ENCODE measurements at regions of chr1 and their contacts with region 1.

Region 1: DNA sequence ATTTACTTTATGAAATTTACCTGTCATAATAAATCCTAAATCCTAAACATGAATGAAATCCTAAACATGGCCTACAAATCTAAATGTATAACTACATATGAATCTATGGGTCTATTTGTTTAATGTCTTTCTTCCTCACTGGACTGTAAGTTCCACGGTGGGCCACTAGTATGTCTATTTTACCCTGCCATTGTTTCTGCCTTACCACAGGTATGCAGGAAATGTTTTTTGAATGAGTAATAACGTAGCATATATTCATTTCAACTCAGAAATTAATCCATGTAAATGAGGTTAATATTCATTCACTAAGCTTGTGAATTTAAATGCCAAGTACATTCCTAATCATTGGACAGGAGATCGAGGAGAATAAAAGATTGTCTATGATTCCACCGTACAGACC is 35.3 kb downstream of the B3GALNT2 start:
- DNase-seq: no peak
- H3K4me3 ChIP-seq: no peak overlapping the region
- H3K27ac ChIP-seq: no peak overlapping the region
- H3K4me1 ChIP-seq: no peaks in the 10 kb centered on the region
- H3K27me3 ChIP-seq: no peaks in the 10 kb centered on the region
- CTCF ChIP-seq: no peak
- EP300 ChIP-seq: no peak
- POLR2A ChIP-seq: no peak

Region 2: DNA sequence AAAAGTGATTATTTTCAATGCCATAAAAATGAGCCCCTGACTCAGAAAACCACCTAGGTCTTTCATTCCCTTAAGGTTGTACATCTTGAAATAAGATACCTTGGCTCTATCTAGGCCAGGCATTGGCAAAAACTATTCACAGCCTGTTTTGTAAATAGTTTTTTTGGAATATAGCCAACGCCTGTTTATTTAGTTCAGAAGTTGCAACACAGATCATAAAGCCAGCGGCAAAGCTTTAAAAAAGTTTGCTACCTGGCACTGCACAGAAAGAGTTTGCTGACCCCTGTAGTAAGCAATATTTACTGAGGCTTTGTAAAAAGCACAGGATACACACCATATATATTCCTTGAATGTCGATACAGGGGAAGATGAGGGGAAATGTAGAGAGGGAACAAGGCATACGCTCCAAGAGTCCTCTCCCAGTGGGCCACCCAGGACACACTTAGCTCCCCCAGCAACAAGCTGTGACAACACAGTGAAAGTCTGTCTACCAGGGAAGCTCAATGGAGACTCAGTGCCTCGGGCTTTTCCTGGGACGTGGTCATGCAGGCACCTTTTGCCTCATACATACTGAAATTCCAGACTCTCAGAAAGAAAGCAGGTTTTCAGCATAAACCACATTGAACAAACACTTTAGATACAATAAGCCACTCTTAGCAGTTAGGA is 1010.5 kb before region 1 on chr1:
- in situ Hi-C with region 1: loop called in 1 of 4 experiments (anchors 25 kb)
- intact Hi-C with region 1: no loop called
- DNase-seq: no peak
- H3K4me3 ChIP-seq: no peak overlapping the region
- H3K27ac ChIP-seq: no peak overlapping the region
- H3K4me1 ChIP-seq: peaks cover 0 to 22% (median 7%) of the 10 kb centered on the region in 4 donors
- H3K27me3 ChIP-seq: no peaks in the 10 kb centered on the region
- CTCF ChIP-seq: no peak
- EP300 ChIP-seq: no peak
- POLR2A ChIP-seq: no peak